ENCODE measurements at regions of chr5 and their contacts with region 1.

Region 1: GRCh38 chr5:149834246-149834855 is 104.2 kb downstream of the PPARGC1B start:
- DNase-seq: peak; percentile 87 to 90
- ATAC-seq: peak; percentile 67 to 77
- H3K4me3 ChIP-seq: no peak overlapping the region
- H3K27ac ChIP-seq: no peak overlapping the region
- H3K4me1 ChIP-seq: peaks cover 16% of the 10 kb centered on the region
- CTCF ChIP-seq: peak; percentile 91
- EP300 ChIP-seq: no peak
- POLR2A ChIP-seq: no peak
- RAD21 ChIP-seq: peak; percentile 83 to 90

Region 2: GRCh38 chr5:148558892-148559291 is 1275.5 kb before region 1 on chr5:
- CTCF ChIA-PET with region 1: no interaction called
- POLR2A ChIA-PET with region 1: no interaction called
- DNase-seq: no peak
- ATAC-seq: no peak
- H3K4me3 ChIP-seq: no peak overlapping the region
- H3K27ac ChIP-seq: no peak overlapping the region
- H3K4me1 ChIP-seq: no peaks in the 10 kb centered on the region
- CTCF ChIP-seq: no peak
- EP300 ChIP-seq: no peak
- POLR2A ChIP-seq: no peak
- RAD21 ChIP-seq: no peak

Region 3: DNA sequence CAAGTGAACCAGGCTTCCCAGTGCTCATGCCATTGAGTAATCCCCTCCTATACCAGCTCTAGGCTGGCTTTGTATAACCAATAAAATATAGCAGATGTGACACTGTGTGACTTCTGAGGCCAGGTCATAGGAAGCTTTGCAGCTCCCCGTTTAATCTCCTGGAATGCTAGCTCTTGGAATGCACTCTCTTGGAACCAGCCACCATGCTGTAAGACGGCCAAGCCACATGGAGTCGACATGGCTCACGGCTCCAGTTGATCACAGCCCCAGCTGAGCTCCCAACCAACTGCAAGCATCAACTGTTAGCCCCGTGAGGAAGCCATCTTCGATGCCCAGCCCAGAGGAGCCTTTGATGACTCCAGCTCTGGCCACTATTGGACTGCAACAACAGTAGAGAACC is 846.0 kb before region 1 on chr5:
- CTCF ChIA-PET with region 1: no interaction called
- POLR2A ChIA-PET with region 1: no interaction called
- DNase-seq: no peak
- ATAC-seq: no peak
- H3K4me3 ChIP-seq: no peak overlapping the region
- H3K27ac ChIP-seq: no peak overlapping the region
- H3K4me1 ChIP-seq: peaks cover 6% of the 10 kb centered on the region; the same call in 2 of the 3 replicates
- CTCF ChIP-seq: no peak
- EP300 ChIP-seq: no peak
- POLR2A ChIP-seq: no peak
- RAD21 ChIP-seq: no peak

Region 4: DNA sequence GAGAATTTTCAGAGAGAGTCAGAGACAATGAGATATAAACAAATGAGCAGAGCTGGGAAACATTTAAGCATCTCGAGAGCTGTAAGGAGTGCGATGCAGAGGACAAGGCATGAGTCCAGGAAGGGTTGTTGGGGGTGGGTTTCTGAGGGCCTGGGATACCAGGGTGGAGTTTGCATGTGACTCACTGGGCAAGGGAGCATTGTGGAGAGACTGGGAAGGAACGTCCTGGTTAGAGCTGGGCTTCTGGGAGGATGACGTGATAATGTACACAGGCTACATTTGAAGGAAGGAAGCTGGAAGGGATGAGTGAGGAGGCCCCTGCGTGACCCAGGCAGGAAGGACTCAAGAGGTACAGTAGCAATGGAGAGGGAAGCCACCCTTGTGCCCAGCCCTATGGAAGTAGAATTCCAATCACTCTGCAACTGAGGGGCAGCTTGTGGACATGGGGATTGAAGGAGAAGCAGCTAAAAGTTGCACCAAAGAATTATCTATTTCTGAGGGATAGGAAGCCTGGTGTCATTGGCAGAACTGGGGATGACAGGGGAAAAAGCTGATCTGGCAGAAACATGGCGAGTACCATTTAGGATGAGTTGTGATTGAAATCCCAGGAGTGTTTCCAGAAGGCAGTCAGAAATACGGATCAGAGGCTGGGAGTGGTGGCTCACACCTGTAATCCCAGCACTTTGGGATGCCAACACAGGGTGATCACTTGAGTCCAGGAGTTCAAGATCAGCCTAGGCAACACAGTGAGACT is 622.0 kb before region 1 on chr5:
- CTCF ChIA-PET with region 1: no interaction called
- POLR2A ChIA-PET with region 1: no interaction called
- DNase-seq: no peak
- ATAC-seq: no peak
- H3K4me3 ChIP-seq: no peak overlapping the region
- H3K27ac ChIP-seq: no peak overlapping the region
- H3K4me1 ChIP-seq: no peaks in the 10 kb centered on the region
- CTCF ChIP-seq: no peak
- EP300 ChIP-seq: no peak
- POLR2A ChIP-seq: no peak
- RAD21 ChIP-seq: no peak

Region 5: GRCh38 chr5:149822301-149822700 is 12.1 kb before region 1 on chr5:
- CTCF ChIA-PET with region 1: interaction called, 768 read pairs
- POLR2A ChIA-PET with region 1: no interaction called
- DNase-seq: no peak
- ATAC-seq: no peak
- H3K4me3 ChIP-seq: no peak overlapping the region
- H3K27ac ChIP-seq: no peak overlapping the region
- H3K4me1 ChIP-seq: no peaks in the 10 kb centered on the region
- CTCF ChIP-seq: no peak
- EP300 ChIP-seq: no peak
- POLR2A ChIP-seq: no peak
- RAD21 ChIP-seq: no peak

Region 6: GRCh38 chr5:149932445-149933350 is 98.3 kb after region 1 on chr5:
- CTCF ChIA-PET with region 1: interaction called, 69 read pairs
- POLR2A ChIA-PET with region 1: no interaction called
- DNase-seq: peak; percentile 54 to 69
- ATAC-seq: peak; percentile 95
- H3K4me3 ChIP-seq: peak overlapping the region; percentile 41
- H3K27ac ChIP-seq: peak overlapping the region; percentile 88 to 92
- H3K4me1 ChIP-seq: peaks cover 47% of the 10 kb centered on the region
- CTCF ChIP-seq: peak; percentile 78
- EP300 ChIP-seq: no peak
- POLR2A ChIP-seq: no peak
- RAD21 ChIP-seq: peak; percentile 61 to 72

Region 7: GRCh38 chr5:149979896-149980295 is 145.5 kb after region 1 on chr5:
- CTCF ChIA-PET with region 1: interaction called, 40 read pairs
- POLR2A ChIA-PET with region 1: no interaction called
- DNase-seq: no peak
- ATAC-seq: no peak
- H3K4me3 ChIP-seq: no peak overlapping the region
- H3K27ac ChIP-seq: no peak overlapping the region
- H3K4me1 ChIP-seq: peaks cover 10% of the 10 kb centered on the region; the same call in 1 of the 3 replicates
- CTCF ChIP-seq: no peak
- EP300 ChIP-seq: no peak
- POLR2A ChIP-seq: no peak
- RAD21 ChIP-seq: no peak

Region 8: GRCh38 chr5:150122158-150122510 is 287.8 kb after region 1 on chr5:
- CTCF ChIA-PET with region 1: interaction called, 14 read pairs
- POLR2A ChIA-PET with region 1: no interaction called
- DNase-seq: peak; percentile 38 to 71
- ATAC-seq: peak; percentile 60 to 83
- H3K4me3 ChIP-seq: no peak overlapping the region
- H3K27ac ChIP-seq: peak overlapping the region in 1 of 2 experiments; percentile 44; a peak in 3 of 6 replicates
- H3K4me1 ChIP-seq: 0 out of 3 replicates have a peak, but pooled peaks cover 7% of the 10 kb centered on the region
- CTCF ChIP-seq: peak; percentile 45
- EP300 ChIP-seq: no peak
- POLR2A ChIP-seq: no peak
- RAD21 ChIP-seq: peak; percentile 31 to 40; a peak in 4 of 5 replicates

Measured in A549 (cell line).